Psoas muscle (tissue), 8 donors: ENCODE measurements at regions of chr2 and their contacts with region 1.

Region 1: GRCh38 chr2:190880378-190881073 is at the start of gene GLS:
- DNase-seq: peak; percentile 95 to 97
- ATAC-seq: peak; percentile 94 to 97 (median 96)
- H3K4me3 ChIP-seq: peak within 1 kb of the TSS; percentile 99
- H3K27ac ChIP-seq: peak within 1 kb of the TSS; percentile 96
- H3K4me1 ChIP-seq: peaks cover 33% of the 10 kb centered on the region
- H3K27me3 ChIP-seq: no peaks in the 10 kb centered on the region
- CTCF ChIP-seq: no peak
- total RNA-seq, gene GLS: 19.4 to 30.6 (median 29.0) TPM

Region 2: GRCh38 chr2:190927301-190927700 is 46.8 kb after region 1 on chr2:
- intact Hi-C with region 1: loop called in 1 of 2 experiments (anchors 5 kb)
- DNase-seq: no peak
- ATAC-seq: no peak
- H3K4me3 ChIP-seq: no peak overlapping the region
- H3K27ac ChIP-seq: no peak overlapping the region
- H3K4me1 ChIP-seq: no peaks in the 10 kb centered on the region
- H3K27me3 ChIP-seq: no peaks in the 10 kb centered on the region
- CTCF ChIP-seq: no peak

Region 3: DNA sequence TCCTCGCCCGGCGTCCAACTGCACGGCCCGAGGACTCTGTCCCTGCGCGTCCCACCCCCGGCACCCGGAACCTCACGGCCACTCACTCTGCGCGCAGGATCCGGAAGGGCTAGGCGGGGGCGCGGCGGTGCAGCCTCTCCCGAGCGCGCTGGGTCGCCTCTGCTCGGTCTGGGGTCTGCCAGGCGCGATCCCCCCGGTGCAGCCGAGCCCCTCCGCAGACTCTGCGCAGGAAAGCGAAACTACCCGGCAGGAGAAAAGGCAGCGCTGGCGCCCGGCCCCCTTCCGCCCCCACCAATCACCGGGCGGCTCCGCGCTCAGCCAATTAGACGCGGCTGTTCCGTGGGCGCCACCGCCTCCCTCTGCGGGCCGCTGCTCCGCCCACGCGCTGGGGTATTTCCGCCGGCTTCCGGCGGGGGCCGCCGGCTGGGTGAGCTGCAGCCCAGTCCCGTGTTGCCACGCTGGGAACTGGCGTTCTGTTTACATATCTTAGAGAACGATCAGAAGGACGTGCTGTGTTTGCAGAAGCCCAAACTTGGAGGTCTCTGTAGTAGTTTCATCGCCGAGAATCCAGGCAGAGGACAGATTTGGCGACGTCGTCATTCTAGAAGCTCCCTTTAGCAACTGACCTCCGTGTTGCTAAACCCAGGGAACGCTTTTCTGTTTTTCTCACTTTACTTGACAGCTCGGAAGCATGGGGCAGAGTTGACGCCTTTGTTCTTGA is 133.6 kb after region 1 on chr2 and contains the start of gene STAT1:
- intact Hi-C with region 1: loop called in 1 of 2 experiments (anchors 5 kb)
- DNase-seq: peak; percentile 94 to 96
- ATAC-seq: peak; percentile 97 to 99 (median 98)
- H3K4me3 ChIP-seq: peak within 1 kb of the TSS; percentile 91
- H3K27ac ChIP-seq: peak within 1 kb of the TSS; percentile 92
- H3K4me1 ChIP-seq: peaks cover 13% of the 10 kb centered on the region
- H3K27me3 ChIP-seq: no peaks in the 10 kb centered on the region
- CTCF ChIP-seq: no peak
- total RNA-seq, gene STAT1: 26.1 to 49.0 (median 39.7) TPM